ENCODE measurements at regions of chrX and their contacts with region 1.

Region 1: GRCh38 chrX:135521405-135522189 is 1.1 kb downstream of the INTS6L start:
- DNase-seq: peak; percentile 64
- ATAC-seq: peak; percentile 81
- H3K4me3 ChIP-seq: peak overlapping the region; percentile 73
- H3K27ac ChIP-seq: peak overlapping the region; percentile 74
- H3K4me1 ChIP-seq: no peaks in the 10 kb centered on the region
- H3K27me3 ChIP-seq: no peaks in the 10 kb centered on the region
- CTCF ChIP-seq: peak in 1 of 3 experiments; percentile 9; a peak in 2 of 6 replicates
- EP300 ChIP-seq: 0 out of 4 replicates have a peak, but pooled peaks of 1 of the 2 experiments have one; percentile 30
- POLR2A ChIP-seq: peak; percentile 74
- RAD21 ChIP-seq: no peak

Region 2: DNA sequence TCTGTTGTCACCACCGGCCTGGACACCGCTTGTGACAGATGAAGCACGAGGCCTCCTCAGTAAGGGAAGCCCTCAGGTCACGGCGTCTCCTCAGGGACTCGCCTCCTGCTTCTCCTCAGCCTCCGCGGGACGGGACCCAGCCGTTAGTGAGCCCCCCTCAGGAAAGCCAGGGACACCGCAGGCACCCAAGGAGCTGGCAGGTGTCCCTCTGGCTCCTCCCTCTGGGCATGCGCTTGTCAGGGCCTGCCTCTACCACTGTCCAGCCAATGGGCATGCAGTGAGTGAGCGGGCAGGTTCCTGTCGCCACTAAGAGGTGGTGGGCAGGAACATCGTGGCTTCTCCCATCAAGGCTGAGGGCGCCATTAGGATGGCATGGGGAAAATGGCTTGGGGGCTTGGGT is 326.9 kb before region 1 on chrX:
- CTCF ChIA-PET with region 1: no interaction called
- POLR2A ChIA-PET with region 1: no interaction called
- RAD21 ChIA-PET with region 1: no interaction called
- SMC1A ChIA-PET with region 1: no interaction called
- in situ Hi-C with region 1: no loop called
- intact Hi-C with region 1: no loop called
- DNase-seq: no peak
- ATAC-seq: no peak
- H3K4me3 ChIP-seq: no peak overlapping the region
- H3K27ac ChIP-seq: no peak overlapping the region
- H3K4me1 ChIP-seq: no peaks in the 10 kb centered on the region
- H3K27me3 ChIP-seq: no peaks in the 10 kb centered on the region
- CTCF ChIP-seq: no peak
- EP300 ChIP-seq: no peak
- POLR2A ChIP-seq: no peak
- RAD21 ChIP-seq: no peak

Region 3: DNA sequence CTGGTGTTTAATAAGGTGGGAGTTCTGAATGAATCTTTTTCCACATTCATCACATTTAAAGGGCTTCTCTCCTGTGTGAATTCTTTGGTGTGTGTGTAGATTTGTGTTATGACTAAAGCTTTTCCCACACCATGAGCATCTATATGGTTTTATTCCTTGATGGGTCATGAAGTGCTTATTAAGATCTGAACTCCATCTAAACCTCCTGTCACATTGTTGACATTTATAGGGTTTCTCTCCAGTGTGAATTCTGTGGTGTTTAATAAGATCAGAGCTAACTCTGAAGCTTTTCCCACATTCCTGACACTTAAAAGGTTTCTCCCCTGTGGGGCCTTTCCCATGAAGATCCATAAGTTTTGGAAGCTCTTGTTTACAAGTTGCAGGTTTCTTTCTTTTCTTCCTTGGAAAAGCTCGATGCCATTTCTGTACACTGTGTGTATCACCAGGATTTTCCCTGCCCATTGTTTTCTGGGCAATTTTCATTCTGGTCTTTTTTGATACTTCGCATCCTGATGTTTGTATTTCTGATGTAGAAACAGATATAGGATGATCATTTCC is 234.3 kb before region 1 on chrX:
- CTCF ChIA-PET with region 1: no interaction called
- POLR2A ChIA-PET with region 1: no interaction called
- RAD21 ChIA-PET with region 1: no interaction called
- SMC1A ChIA-PET with region 1: no interaction called
- in situ Hi-C with region 1: no loop called
- intact Hi-C with region 1: no loop called
- DNase-seq: no peak
- ATAC-seq: no peak
- H3K4me3 ChIP-seq: no peak overlapping the region
- H3K27ac ChIP-seq: no peak overlapping the region
- H3K4me1 ChIP-seq: no peaks in the 10 kb centered on the region
- H3K27me3 ChIP-seq: no peaks in the 10 kb centered on the region
- CTCF ChIP-seq: no peak
- EP300 ChIP-seq: no peak
- POLR2A ChIP-seq: no peak
- RAD21 ChIP-seq: no peak

Region 4: GRCh38 chrX:135531813-135532212 is 10.2 kb after region 1 on chrX:
- CTCF ChIA-PET with region 1: interaction called, 11 read pairs
- POLR2A ChIA-PET with region 1: interaction called, 15 read pairs
- RAD21 ChIA-PET with region 1: interaction called, 3 read pairs
- SMC1A ChIA-PET with region 1: interaction called, 6 read pairs
- in situ Hi-C with region 1: no loop called
- intact Hi-C with region 1: no loop called
- DNase-seq: no peak
- ATAC-seq: no peak
- H3K4me3 ChIP-seq: no peak overlapping the region
- H3K27ac ChIP-seq: no peak overlapping the region
- H3K4me1 ChIP-seq: no peaks in the 10 kb centered on the region
- H3K27me3 ChIP-seq: no peaks in the 10 kb centered on the region
- CTCF ChIP-seq: no peak
- EP300 ChIP-seq: no peak
- POLR2A ChIP-seq: no peak
- RAD21 ChIP-seq: no peak

Region 5: GRCh38 chrX:135707880-135708279 is 186.3 kb after region 1 on chrX:
- CTCF ChIA-PET with region 1: no interaction called
- POLR2A ChIA-PET with region 1: no interaction called
- RAD21 ChIA-PET with region 1: no interaction called
- SMC1A ChIA-PET with region 1: no interaction called
- in situ Hi-C with region 1: no loop called
- intact Hi-C with region 1: no loop called
- DNase-seq: no peak
- ATAC-seq: peak; percentile 84
- H3K4me3 ChIP-seq: no peak overlapping the region
- H3K27ac ChIP-seq: no peak overlapping the region
- H3K4me1 ChIP-seq: no peaks in the 10 kb centered on the region
- H3K27me3 ChIP-seq: no peaks in the 10 kb centered on the region
- CTCF ChIP-seq: peak; percentile 54 to 63 (median 62); a peak in 5 of 6 replicates
- EP300 ChIP-seq: no peak
- POLR2A ChIP-seq: no peak
- RAD21 ChIP-seq: peak; percentile 50

Region 6: DNA sequence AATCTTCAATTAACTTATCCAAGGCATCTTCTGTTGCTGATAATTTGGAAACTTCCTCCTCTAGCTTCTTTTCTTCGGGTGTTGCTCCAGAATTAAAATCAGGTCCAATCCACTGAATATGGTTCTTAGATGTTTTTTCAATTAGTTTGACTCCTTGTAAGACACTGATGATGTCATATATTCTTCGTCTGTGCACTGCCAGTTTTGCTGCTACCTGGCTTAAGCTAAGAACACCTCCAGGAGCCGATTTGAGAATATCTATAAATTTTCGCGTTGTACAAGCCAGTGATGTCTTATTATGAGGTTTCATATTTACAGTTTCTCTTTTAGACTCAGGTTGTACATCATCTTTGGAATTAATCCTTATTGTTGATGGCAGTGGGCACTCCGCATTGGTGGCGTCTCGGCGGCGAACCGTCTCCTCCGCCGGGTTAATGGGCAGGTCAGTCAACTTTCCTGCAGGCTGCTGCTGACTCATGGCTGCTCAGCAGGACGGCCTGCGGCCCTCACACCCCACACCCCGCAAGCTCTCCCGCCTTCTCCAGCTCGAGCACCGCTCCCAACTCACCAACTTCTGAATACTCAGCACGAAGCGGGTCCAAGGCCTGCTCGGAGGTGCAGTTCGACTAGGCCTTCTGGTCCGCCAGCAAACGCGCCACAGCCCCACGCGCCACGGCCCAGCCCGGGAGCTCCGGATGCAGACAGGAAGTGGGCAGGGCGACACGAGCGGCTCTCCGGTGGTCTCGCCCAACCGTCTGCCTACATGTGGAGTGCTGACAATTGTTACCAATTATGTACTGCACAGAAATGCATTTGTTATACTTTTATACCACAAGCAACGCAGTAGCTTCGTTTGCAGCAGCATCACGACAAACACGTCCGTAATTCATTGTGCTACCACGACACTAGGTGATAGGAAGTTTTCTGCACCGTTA is 576.5 kb after region 1 on chrX:
- CTCF ChIA-PET with region 1: no interaction called
- POLR2A ChIA-PET with region 1: no interaction called
- RAD21 ChIA-PET with region 1: no interaction called
- SMC1A ChIA-PET with region 1: no interaction called
- in situ Hi-C with region 1: no loop called
- intact Hi-C with region 1: no loop called
- DNase-seq: no peak
- ATAC-seq: no peak
- H3K4me3 ChIP-seq: no peak overlapping the region
- H3K27ac ChIP-seq: no peak overlapping the region
- H3K4me1 ChIP-seq: no peaks in the 10 kb centered on the region
- H3K27me3 ChIP-seq: no peaks in the 10 kb centered on the region
- CTCF ChIP-seq: no peak
- EP300 ChIP-seq: no peak
- POLR2A ChIP-seq: no peak
- RAD21 ChIP-seq: no peak